HEK293 (cell line): ENCODE measurements at regions of chr2 and their contacts with region 1.

Region 1: DNA sequence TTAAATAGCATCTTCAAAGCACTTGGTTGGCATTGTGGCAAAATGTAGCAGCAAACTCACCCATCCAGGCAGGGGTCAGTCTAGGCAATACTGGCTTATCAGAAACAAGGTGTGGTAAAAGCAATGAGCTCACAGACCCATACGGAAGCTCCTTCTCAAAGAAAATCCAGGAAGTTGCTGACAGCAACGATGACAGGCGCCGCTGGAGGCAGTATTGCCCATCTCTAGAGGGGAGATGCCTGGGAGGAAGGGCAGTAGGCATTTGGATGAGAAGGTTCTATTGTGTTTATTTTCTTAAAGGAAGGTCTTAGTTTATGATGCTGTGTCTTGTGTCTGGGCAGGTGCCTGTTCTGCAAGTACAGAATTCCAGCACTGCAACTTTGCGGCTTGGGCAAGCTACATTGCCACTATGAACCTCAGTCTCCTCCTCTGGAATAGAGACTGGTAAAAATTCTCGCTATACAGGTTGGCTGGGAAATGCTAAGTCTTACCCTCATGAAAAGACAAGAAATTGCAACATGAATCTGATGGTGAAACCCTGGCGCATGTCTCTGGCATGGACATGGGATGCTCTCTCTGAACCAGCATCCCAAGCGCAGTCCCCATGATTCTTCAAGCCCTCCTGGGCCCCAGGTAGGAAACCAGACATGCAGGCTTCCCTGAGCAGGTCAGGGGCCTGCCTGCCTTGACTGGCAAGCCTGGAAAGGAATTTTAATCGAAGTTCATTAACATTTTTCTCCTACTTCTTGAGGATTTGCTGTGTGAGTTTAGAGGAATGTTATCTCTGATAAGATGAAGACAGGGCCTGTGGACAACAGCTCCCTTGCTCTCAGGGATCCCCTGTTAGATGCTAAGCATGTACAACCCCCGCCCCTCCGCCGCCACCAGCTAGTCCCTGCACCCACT is 156.0 kb downstream of the TFCP2L1 start:
- H3K4me3 ChIP-seq: no peak overlapping the region
- H3K27ac ChIP-seq: no peak overlapping the region
- H3K4me1 ChIP-seq: no peaks in the 10 kb centered on the region
- CTCF ChIP-seq: no peak

Region 2: GRCh38 chr2:120914839-120915521 is 214.0 kb before region 1 on chr2:
- CTCF ChIA-PET with region 1: no interaction called
- POLR2A ChIA-PET with region 1: no interaction called
- H3K4me3 ChIP-seq: no peak overlapping the region
- H3K27ac ChIP-seq: no peak overlapping the region
- H3K4me1 ChIP-seq: no peaks in the 10 kb centered on the region
- CTCF ChIP-seq: no peak

Region 3: DNA sequence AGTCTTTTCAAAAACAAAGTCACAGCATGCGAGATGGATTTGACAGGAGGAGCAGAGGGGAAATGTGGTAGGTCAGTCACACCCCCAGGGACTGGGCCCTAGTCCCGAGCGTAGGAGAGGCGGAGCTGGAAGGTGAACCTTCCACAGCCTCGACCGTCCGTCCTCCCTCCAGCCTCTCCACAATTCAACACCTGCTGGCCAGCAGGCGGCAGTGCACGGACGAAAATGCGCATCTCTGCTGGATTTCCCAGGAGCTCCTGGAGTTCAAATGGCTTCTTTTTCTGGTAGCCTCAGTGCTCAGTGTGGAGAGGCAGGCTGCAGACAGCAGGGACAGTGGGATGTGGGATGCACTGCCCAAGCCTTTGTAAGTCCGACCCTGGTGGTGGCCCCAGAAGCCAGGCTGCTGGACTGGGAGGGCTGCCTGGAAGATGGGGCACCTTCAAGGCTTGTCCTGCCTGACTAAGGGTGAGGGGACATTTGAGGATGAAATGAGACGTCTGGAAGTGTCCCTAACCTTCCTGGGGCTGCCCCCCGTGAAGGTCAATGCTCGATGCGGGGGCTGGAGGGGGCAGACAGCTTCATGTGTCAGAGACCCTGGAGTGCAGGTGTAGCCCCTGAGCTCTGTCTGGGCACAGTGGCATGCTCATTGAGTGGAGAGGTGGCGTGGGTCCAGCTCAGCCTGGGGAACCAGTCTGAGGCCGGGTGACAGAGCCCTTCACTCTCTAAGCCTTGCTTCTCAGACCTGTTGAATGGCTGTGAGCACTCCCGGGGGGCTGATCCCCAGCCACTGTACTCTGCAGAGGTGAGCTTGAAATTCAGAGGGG is 33.5 kb before region 1 on chr2:
- CTCF ChIA-PET with region 1: interaction called, 28 read pairs
- POLR2A ChIA-PET with region 1: interaction called, 4 read pairs
- H3K4me3 ChIP-seq: no peak overlapping the region
- H3K27ac ChIP-seq: no peak overlapping the region
- H3K4me1 ChIP-seq: no peaks in the 10 kb centered on the region
- CTCF ChIP-seq: peak; percentile 86

Region 4: DNA sequence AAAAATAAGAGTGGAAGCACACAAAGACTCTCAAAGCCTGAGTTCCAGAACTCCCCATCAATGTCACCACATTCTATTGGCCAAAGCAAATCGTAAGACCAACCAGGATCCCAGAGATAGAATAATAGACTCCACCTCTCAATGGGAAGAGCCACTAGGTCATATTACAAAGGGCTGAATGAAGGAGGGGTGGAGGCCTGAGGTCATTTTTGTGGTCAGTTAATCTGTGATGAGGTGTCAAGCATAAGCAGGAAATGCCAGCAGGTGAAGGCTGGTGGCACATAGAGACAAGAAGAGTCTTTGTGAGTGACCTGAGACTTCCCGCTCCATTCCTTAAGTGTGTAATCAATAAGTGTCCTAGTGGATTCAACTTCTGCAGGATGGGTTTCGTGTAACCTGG is 11.7 kb after region 1 on chr2:
- CTCF ChIA-PET with region 1: interaction called, 28 read pairs
- POLR2A ChIA-PET with region 1: no interaction called
- H3K4me3 ChIP-seq: no peak overlapping the region
- H3K27ac ChIP-seq: no peak overlapping the region
- H3K4me1 ChIP-seq: no peaks in the 10 kb centered on the region
- CTCF ChIP-seq: no peak

Region 5: GRCh38 chr2:121319953-121320352 is 190.9 kb after region 1 on chr2:
- CTCF ChIA-PET with region 1: interaction called, 17 read pairs
- POLR2A ChIA-PET with region 1: no interaction called
- H3K4me3 ChIP-seq: no peak overlapping the region
- H3K27ac ChIP-seq: no peak overlapping the region
- H3K4me1 ChIP-seq: no peaks in the 10 kb centered on the region
- CTCF ChIP-seq: no peak

Region 6: DNA sequence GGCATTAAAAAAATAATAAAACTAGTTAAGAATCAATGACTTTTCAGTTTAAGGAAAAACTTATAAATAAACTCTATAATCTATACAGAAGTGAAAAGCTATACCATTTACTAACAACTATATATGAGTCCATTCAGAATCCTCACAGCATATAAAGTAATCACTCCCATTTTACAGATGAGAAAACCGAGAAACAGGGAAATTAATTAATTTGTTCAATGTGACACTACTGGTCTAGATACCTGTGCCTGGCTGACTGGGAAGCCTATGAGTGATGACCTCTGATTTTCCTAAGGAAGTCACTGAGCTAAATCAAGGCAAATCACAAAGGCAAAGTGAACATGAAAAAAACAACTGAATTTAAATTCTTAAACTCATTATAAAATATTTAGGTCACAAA is 302.2 kb after region 1 on chr2:
- CTCF ChIA-PET with region 1: no interaction called
- POLR2A ChIA-PET with region 1: no interaction called
- H3K4me3 ChIP-seq: no peak overlapping the region
- H3K27ac ChIP-seq: no peak overlapping the region
- H3K4me1 ChIP-seq: no peaks in the 10 kb centered on the region; the same call in 1 of the 2 replicates
- CTCF ChIP-seq: no peak